Heart left ventricle (tissue), 16 donors: ENCODE measurements at regions of chr1 and their contacts with region 1.

Region 1: DNA sequence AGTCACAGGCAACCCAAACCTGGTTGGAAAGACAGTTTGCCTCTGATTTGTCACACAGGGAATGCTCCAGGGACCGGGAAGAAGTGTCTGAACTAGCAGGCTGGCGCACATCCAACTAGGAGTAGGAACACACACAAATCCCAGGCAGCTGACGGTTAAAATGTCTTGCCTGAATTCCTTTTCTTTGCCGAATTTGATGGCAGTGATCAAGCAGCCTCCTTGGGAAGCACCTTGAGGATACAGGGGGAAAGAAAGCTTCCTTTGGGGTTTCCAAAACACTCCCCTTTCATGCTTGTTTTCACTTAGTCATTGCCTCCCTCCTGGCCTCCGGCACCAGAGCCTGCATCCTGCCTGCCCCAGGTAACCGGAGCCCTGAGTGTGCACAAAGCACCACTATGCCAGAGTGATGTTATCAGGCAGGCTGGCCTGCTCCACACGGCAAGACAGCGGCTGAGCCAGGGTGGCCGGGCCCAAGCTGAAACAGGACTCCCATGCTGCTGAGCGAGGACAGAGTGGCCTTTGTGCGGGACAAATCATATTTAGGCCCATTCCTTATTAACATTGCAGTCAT is 193.8 kb downstream of the LMX1A start:
- DNase-seq: no peak
- ATAC-seq: no peak
- H3K4me3 ChIP-seq: no peak overlapping the region
- H3K27ac ChIP-seq: no peak overlapping the region
- H3K4me1 ChIP-seq: no peaks in the 10 kb centered on the region
- H3K27me3 ChIP-seq: peaks cover 0 to 13% (median 0%) of the 10 kb centered on the region in 9 donors
- CTCF ChIP-seq: no peak
- POLR2A ChIP-seq: no peak

Region 2: GRCh38 chr1:165114022-165114888 is 48.5 kb before region 1 on chr1:
- intact Hi-C with region 1: no loop called
- DNase-seq: no peak
- ATAC-seq: no peak
- H3K4me3 ChIP-seq: no peak overlapping the region
- H3K27ac ChIP-seq: no peak overlapping the region
- H3K4me1 ChIP-seq: peaks cover 0 to 5% (median 0%) of the 10 kb centered on the region in 12 donors
- H3K27me3 ChIP-seq: peaks cover 0 to 67% (median 24%) of the 10 kb centered on the region in 9 donors
- CTCF ChIP-seq: peak; percentile 53 to 81 (median 71)
- POLR2A ChIP-seq: no peak

Region 3: GRCh38 chr1:165144757-165145397 is 17.9 kb before region 1 on chr1:
- intact Hi-C with region 1: no loop called
- DNase-seq: peak in 4 of 5 donors; percentile 16 to 37 (median 32)
- ATAC-seq: peak in 3 of 4 donors; percentile 62 to 80 (median 72)
- H3K4me3 ChIP-seq: no peak overlapping the region
- H3K27ac ChIP-seq: no peak overlapping the region
- H3K4me1 ChIP-seq: no peaks in the 10 kb centered on the region
- H3K27me3 ChIP-seq: peaks cover 0 to 49% (median 10%) of the 10 kb centered on the region in 9 donors
- CTCF ChIP-seq: peak; percentile 53 to 79 (median 68)
- POLR2A ChIP-seq: no peak

Region 4: DNA sequence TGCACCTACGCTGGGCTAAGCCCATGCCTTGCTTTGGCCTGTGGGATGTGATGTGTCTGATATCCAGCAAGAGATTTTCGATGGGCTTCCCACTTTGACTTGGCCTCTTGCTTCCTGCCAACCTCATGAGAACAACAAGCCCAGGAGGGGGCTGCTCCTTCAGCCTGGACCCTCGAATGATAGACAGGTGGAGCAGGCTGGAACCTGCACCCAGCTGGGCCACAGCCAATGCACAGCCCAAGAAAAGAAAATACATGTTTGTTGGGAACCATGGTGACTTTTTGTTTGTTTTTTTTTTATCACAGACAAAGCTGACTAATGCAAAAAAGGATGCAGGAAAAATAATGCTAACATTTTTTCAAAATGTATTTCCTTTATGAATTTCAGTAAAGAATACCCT is 49.5 kb after region 1 on chr1:
- intact Hi-C with region 1: loop called in 1 of 10 experiments (anchors 5 kb)
- DNase-seq: no peak
- ATAC-seq: no peak
- H3K4me3 ChIP-seq: no peak overlapping the region
- H3K27ac ChIP-seq: no peak overlapping the region
- H3K4me1 ChIP-seq: no peaks in the 10 kb centered on the region
- H3K27me3 ChIP-seq: peaks cover 0 to 6% (median 0%) of the 10 kb centered on the region in 9 donors
- CTCF ChIP-seq: no peak
- POLR2A ChIP-seq: no peak